HepG2 (cell line): ENCODE measurements at regions of chr2 and their contacts with region 1.

Region 1: GRCh38 chr2:148644883-148645538 is 460 bp downstream of the EPC2 start:
- DNase-seq: peak; percentile 91
- ATAC-seq: peak; percentile 74
- H3K4me3 ChIP-seq: peak overlapping the region; percentile 91 to 94 (median 93)
- H3K27ac ChIP-seq: peak overlapping the region; percentile 91
- H3K4me1 ChIP-seq: peaks cover 46% of the 10 kb centered on the region
- H3K27me3 ChIP-seq: peaks cover 0 to 6% of the 10 kb centered on the region in 2 experiments; a peak in 3 of 5 replicates
- CTCF ChIP-seq: peak; percentile 67
- EP300 ChIP-seq: no peak
- POLR2A ChIP-seq: peak; percentile 64 to 87
- RAD21 ChIP-seq: no peak; the same call in 1 of the 2 replicates

Region 2: DNA sequence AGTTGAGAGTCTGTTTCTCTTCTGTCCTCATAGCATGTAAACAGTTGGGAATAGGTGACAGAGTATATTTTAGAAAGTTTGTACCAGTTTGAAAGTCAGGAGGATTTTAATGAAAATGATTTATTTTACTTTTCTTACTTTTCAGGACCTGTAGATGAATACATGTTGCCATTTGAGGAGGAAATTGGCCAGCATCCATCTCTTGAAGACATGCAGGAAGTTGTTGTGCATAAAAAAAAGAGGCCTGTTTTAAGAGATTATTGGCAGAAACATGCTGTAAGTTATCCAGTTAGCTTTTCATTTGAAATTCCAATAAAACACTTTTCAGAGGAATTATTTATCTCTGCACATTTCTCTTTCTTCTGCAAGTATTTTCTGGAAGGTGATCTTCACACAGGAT is 719.1 kb before region 1 on chr2:
- CTCF ChIA-PET with region 1: no interaction called
- POLR2A ChIA-PET with region 1: no interaction called
- in situ Hi-C with region 1: no loop called
- intact Hi-C with region 1: loop called (anchors 1 kb)
- DNase-seq: no peak
- ATAC-seq: no peak
- H3K4me3 ChIP-seq: no peak overlapping the region
- H3K27ac ChIP-seq: peak overlapping the region; percentile 89
- H3K4me1 ChIP-seq: peaks cover 50% of the 10 kb centered on the region
- H3K27me3 ChIP-seq: no peaks in the 10 kb centered on the region
- CTCF ChIP-seq: no peak
- EP300 ChIP-seq: no peak
- POLR2A ChIP-seq: no peak
- RAD21 ChIP-seq: no peak

Region 3: GRCh38 chr2:148552675-148553331 is 92.2 kb before region 1 on chr2:
- CTCF ChIA-PET with region 1: no interaction called
- POLR2A ChIA-PET with region 1: no interaction called
- in situ Hi-C with region 1: no loop called
- intact Hi-C with region 1: no loop called
- DNase-seq: no peak
- ATAC-seq: peak; percentile 86
- H3K4me3 ChIP-seq: peak overlapping the region; percentile 53 to 69 (median 57)
- H3K27ac ChIP-seq: no peak overlapping the region
- H3K4me1 ChIP-seq: peaks cover 10% of the 10 kb centered on the region
- H3K27me3 ChIP-seq: peaks cover 0 to 11% of the 10 kb centered on the region in 2 experiments; a peak in 2 of 5 replicates
- CTCF ChIP-seq: no peak
- EP300 ChIP-seq: no peak
- POLR2A ChIP-seq: no peak
- RAD21 ChIP-seq: no peak

Region 4: GRCh38 chr2:148565272-148565894 is 79.6 kb before region 1 on chr2:
- CTCF ChIA-PET with region 1: no interaction called
- POLR2A ChIA-PET with region 1: no interaction called
- in situ Hi-C with region 1: no loop called
- intact Hi-C with region 1: no loop called
- DNase-seq: no peak
- ATAC-seq: peak; percentile 72
- H3K4me3 ChIP-seq: no peak overlapping the region
- H3K27ac ChIP-seq: no peak overlapping the region
- H3K4me1 ChIP-seq: no peaks in the 10 kb centered on the region
- H3K27me3 ChIP-seq: peaks cover 2 to 59% of the 10 kb centered on the region in 2 experiments; a peak in 3 of 5 replicates
- CTCF ChIP-seq: peak; percentile 46
- EP300 ChIP-seq: no peak
- POLR2A ChIP-seq: no peak
- RAD21 ChIP-seq: no peak

Region 5: DNA sequence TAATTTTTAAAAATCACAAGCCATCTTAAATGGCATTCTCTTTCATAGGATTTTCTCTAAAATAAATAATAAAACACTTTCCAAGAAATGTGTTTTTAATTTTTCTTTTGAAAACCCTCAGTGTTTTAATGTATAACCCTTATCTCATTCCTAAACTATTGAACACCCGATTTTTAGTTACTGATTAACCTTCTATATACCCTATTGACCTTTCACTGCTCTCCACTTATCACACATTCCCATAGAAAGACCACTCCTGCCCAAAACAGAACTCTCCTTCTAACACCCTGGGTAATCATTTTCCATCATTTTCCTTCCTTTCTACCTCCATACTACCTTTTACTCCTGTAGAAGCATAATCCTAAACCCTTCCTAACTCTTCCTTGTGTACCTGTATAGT is 102.0 kb after region 1 on chr2:
- CTCF ChIA-PET with region 1: no interaction called
- POLR2A ChIA-PET with region 1: interaction called, 3 read pairs
- in situ Hi-C with region 1: no loop called
- intact Hi-C with region 1: loop called (anchors 2 kb)
- DNase-seq: peak; percentile 70
- ATAC-seq: peak; percentile 98
- H3K4me3 ChIP-seq: no peak overlapping the region
- H3K27ac ChIP-seq: no peak overlapping the region
- H3K4me1 ChIP-seq: peaks cover 29% of the 10 kb centered on the region
- H3K27me3 ChIP-seq: no peaks in the 10 kb centered on the region
- CTCF ChIP-seq: no peak
- EP300 ChIP-seq: no peak
- POLR2A ChIP-seq: no peak
- RAD21 ChIP-seq: no peak

Region 6: DNA sequence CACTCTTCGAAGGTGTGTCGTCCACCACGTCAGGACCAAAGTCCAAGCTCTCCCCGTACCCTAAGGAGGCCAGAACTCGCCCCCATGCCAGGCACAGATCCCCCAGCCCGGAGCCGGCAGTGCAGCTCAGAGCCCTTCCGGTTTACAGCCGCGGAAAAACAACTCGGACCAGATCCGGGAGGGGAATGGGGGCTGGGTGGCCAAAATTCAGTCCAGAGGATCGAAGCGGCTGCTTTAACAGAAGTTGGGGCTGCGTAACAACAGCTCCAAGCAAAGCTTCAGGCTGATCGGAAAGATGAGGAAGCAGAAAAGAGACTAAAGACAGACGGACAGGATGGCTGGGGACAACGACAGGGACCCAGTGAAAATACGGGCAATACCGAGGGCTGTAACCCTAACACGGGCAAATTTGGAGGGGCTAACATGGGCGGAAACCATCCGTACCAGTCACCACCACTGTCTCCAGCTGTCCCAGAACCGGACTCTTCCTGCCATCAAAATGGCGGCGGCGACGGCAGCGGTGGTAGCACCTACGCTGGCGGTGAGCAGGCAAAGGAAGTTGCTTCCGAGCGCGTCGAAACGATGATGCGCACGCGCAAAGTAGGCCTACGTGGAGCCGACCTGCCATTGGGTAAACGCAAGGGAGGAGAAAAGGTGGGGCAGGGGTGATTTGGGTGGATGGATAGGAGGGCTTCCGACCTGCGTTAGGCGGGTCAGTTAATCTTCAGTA is 942.4 kb after region 1 on chr2 and contains the start of gene MMADHC:
- CTCF ChIA-PET with region 1: no interaction called
- POLR2A ChIA-PET with region 1: no interaction called
- in situ Hi-C with region 1: no loop called
- intact Hi-C with region 1: loop called (anchors 10 kb)
- DNase-seq: peak; percentile 97
- ATAC-seq: peak; percentile 96
- H3K4me3 ChIP-seq: peak within 1 kb of the TSS; percentile 83 to 88 (median 83)
- H3K27ac ChIP-seq: peak within 1 kb of the TSS; percentile 97
- H3K4me1 ChIP-seq: peaks cover 47% of the 10 kb centered on the region
- H3K27me3 ChIP-seq: no peaks in the 10 kb centered on the region; a peak in 1 of 5 replicates
- CTCF ChIP-seq: no peak
- EP300 ChIP-seq: peak; percentile 19 to 37; a peak in 1 of 4 replicates
- POLR2A ChIP-seq: peak; percentile 88 to 95
- RAD21 ChIP-seq: peak; percentile 28; the same call in 1 of the 2 replicates
- total RNA-seq, gene MMADHC: 210 and 304 TPM in 2 replicates